Mammary epithelial cell (primary cell): ENCODE measurements at regions of chr16 and their contacts with region 1.

Region 1: DNA sequence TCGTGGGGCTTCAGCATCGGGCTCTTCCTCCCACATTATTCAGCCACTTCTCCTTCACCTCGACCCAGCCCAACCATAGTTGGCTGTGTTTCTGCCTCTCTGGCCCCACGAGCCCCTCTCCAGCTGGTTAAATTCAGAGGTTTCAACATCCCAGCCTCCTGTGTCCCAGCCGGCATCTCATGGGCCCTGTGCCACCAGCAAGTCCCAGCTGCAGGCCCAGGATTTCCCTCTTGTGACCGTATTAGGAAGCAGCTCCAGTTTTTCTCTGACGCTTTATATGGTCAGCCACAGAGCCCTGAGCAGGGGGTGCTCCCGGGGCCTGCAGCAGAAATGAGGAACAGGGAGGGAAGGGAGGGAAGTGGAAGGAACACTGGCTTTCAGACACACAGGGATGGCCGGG is 27.4 kb downstream of the MYH11 start:
- DNase-seq: no peak
- H3K4me3 ChIP-seq: no peak overlapping the region
- H3K27ac ChIP-seq: no peak overlapping the region
- H3K4me1 ChIP-seq: no peaks in the 10 kb centered on the region
- H3K27me3 ChIP-seq: no peaks in the 10 kb centered on the region
- CTCF ChIP-seq: no peak

Region 2: DNA sequence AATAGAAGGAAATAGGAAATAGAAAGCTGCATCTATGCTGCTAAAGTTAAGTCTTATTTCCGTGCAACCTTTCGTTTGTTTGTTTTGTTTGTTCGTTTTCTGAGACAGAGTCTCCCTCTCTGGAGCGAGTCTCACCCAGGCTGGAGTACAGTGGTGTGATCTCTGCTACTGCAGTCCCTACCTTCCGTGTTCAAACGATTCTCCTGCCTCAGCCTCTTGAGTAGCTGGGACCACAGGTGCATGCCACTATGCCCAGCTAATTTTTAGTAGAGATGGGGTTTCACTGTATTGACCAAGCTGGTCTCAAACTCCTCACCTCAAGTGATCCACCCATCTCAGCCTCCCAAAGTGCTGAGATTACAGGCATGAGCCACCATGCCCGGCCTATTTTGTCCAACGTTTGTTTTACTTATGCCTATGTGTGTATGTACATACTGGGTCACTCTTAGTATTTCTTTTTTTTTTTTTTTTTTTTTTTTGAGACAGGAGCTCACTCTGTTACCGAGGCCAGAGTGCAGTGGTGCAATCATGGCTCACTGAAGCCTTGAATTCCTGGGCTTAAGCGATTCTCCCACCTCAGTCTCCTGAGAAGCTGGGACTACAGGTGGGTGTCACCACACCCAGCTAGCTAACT is 378.2 kb before region 1 on chr16:
- CTCF ChIA-PET with region 1: interaction called, 10 read pairs
- dilution Hi-C with region 1: no loop called
- in situ Hi-C with region 1: no loop called
- intact Hi-C with region 1: no loop called
- DNase-seq: no peak
- H3K4me3 ChIP-seq: no peak overlapping the region
- H3K27ac ChIP-seq: no peak overlapping the region
- H3K4me1 ChIP-seq: no peaks in the 10 kb centered on the region
- H3K27me3 ChIP-seq: no peaks in the 10 kb centered on the region
- CTCF ChIP-seq: no peak

Region 3: GRCh38 chr16:15538507-15538906 is 291.0 kb before region 1 on chr16:
- CTCF ChIA-PET with region 1: no interaction called
- dilution Hi-C with region 1: no loop called
- in situ Hi-C with region 1: no loop called
- intact Hi-C with region 1: no loop called
- DNase-seq: no peak
- H3K4me3 ChIP-seq: no peak overlapping the region
- H3K27ac ChIP-seq: no peak overlapping the region
- H3K4me1 ChIP-seq: no peaks in the 10 kb centered on the region
- H3K27me3 ChIP-seq: no peaks in the 10 kb centered on the region
- CTCF ChIP-seq: no peak

Region 4: DNA sequence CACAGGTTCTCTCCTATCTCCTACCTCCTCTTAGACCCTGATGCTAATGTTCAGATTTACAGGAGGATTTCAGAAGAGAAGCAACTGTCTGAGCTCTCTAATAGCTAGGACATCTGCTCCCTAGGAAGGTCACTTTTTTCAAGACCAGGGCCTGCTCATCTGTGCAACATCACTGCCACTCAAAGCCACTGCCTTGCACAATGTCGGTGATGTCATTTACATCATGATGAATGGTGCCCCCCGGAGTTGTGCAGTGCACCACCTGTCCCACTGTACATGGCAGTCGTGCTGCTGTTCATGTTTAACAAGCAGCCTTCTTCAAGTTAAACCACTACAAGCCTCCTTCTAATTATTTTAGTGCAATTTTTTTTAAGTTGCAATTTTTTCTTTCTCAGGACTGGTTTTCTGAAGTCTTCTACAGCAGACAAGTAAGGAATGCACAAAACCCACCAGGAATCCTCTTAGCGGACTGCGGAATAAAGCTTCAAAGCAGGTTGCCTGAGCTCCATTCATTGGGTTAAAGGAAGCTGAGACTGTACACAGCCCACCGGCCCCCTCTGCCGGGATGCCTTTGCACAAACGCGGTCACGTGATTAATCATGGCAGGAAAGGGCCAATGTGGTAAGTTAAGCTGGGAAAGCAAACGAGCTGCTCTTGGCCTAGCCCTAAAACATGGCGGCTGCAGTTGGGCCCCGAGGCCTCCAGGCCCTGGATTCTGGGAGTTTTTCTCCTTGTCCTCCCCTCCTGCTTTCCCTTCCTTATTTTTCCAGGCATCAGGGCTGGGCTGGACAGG is 46.7 kb before region 1 on chr16:
- CTCF ChIA-PET with region 1: interaction called, 4 read pairs
- dilution Hi-C with region 1: loop called (anchors 5 kb)
- in situ Hi-C with region 1: loop called (anchors 5 to 10 kb)
- intact Hi-C with region 1: no loop called
- DNase-seq: no peak
- H3K4me3 ChIP-seq: no peak overlapping the region
- H3K27ac ChIP-seq: no peak overlapping the region
- H3K4me1 ChIP-seq: no peaks in the 10 kb centered on the region
- H3K27me3 ChIP-seq: no peaks in the 10 kb centered on the region
- CTCF ChIP-seq: no peak

Region 5: DNA sequence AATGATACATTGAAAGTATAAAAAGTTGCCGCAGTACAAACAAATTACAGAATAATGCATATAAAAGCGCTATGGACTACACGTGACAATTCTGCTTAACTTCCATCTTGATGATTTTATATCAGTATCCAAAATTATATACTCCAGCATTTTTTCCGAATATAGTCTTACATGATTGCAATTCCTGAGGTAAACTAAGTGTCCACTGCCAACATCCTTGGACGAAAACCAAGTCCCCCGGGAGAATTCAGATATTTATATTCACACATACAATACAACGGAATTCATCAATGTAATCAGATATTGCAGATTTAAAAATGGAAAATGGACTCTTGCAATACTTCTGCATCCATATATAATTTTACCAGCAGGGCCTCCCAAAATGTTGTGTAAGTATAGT is 36.3 kb after region 1 on chr16:
- CTCF ChIA-PET with region 1: no interaction called
- dilution Hi-C with region 1: loop called (anchors 5 kb)
- in situ Hi-C with region 1: no loop called
- intact Hi-C with region 1: no loop called
- DNase-seq: no peak
- H3K4me3 ChIP-seq: no peak overlapping the region
- H3K27ac ChIP-seq: no peak overlapping the region
- H3K4me1 ChIP-seq: peaks cover 16% of the 10 kb centered on the region
- H3K27me3 ChIP-seq: no peaks in the 10 kb centered on the region
- CTCF ChIP-seq: no peak